Activated naive CD4-positive, alpha-beta T cell treated with anti-CD3 and anti-CD28 coated beads, Interleukin-2, amount 10 ng/mL, durations not matched to agents 7 days and 5 days (primary cell): ENCODE measurements at regions of chr9 and their contacts with region 1.

Region 1: GRCh38 chr9:98848450-98849149 is 41.1 kb downstream of the GALNT12 start:
- DNase-seq: peak; percentile 84
- H3K4me3 Mint-ChIP-seq: no peak overlapping the region
- H3K27ac Mint-ChIP-seq: no peak overlapping the region
- H3K4me1 Mint-ChIP-seq: peaks cover 11% of the 10 kb centered on the region
- H3K27me3 Mint-ChIP-seq: peaks cover 3% of the 10 kb centered on the region

Region 2: GRCh38 chr9:98964911-98965336 is 116.3 kb after region 1 on chr9:
- CTCF ChIA-PET with region 1: interaction called, 14 read pairs
- DNase-seq: no peak
- H3K4me3 Mint-ChIP-seq: no peak overlapping the region
- H3K27ac Mint-ChIP-seq: no peak overlapping the region
- H3K4me1 Mint-ChIP-seq: no peaks in the 10 kb centered on the region
- H3K27me3 Mint-ChIP-seq: peaks cover 35% of the 10 kb centered on the region

Region 3: DNA sequence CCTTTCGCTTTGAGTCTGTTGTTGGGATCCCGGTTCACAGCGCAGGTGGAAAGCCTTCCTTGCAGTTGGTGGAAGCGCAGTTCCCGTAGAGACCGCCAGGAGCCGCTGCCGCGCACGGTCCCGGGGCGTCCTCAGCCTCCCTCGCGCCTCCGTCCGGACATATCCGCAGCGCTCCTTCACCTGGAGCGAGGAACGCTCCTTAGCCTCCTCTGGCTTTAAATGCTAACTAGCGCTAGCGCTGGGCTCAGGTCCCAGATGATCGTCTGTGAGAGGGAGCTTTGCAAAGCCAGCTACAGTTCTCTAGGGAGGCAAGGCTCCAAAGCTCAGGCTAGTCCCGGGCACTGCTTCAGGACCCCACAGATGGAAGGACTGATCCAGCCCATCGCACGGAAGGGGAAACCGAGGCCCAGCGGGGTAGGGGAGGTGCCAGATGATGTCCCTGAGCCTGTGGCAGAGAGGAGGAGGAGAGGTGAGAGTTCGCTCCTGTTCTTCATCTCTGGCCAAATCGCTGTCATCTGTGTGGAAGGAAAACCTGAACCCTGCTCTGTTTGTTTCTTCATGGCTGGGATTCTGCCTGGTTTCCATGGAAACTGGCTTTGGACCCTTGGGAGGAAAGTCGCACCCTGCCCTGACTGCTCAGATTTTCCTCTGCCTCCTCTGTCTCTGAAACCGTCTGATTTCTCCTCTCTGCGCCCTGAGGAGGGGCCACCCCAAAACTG is 126.6 kb after region 1 on chr9:
- CTCF ChIA-PET with region 1: interaction called, 17 read pairs
- DNase-seq: peak; percentile 86
- H3K4me3 Mint-ChIP-seq: no peak overlapping the region
- H3K27ac Mint-ChIP-seq: no peak overlapping the region
- H3K4me1 Mint-ChIP-seq: peaks cover 13% of the 10 kb centered on the region
- H3K27me3 Mint-ChIP-seq: peaks cover 66% of the 10 kb centered on the region